Astrocyte of the cerebellum (primary cell): ENCODE measurements at regions of chr7 and their contacts with region 1.

Region 1: DNA sequence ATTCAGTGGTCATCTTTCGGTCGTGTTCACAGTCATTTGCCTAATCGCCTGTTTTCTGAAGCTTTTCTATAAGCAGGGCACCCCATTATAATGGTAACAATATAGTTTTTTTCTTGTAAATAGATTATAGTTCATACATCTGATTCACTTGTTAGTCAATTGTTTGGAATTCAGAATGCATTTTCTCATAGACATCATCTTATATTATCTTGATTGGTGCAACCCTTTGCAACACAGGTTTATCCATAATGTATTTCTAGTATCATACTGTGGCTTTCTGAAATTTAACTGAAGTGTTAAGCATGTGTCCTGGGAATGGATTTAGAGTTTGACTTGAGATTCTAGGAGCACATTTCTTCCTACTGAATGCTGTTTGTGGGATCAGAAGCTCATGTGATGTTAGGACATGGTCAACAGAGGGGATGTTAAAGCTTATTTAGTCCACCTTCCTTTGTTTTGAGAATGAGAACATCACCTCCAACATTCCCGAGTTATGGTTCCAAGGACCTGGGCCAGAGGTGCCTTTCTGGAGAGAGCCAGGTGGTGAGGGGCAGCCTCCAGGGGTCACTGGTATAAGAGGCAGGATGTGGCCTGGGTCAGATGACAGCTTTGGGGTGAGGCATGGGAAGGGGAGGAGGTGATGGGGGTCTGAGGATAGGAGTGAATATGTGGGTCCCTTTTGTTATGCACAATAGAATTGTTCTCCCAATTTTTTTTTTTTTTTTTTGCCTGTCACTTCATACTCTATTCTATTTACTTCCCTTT is 415.6 kb downstream of the EXOC4 start:
- DNase-seq: no peak
- H3K4me3 ChIP-seq: no peak overlapping the region
- CTCF ChIP-seq: no peak

Region 2: GRCh38 chr7:133571076-133571475 is 97.4 kb before region 1 on chr7:
- in situ Hi-C with region 1: loop called (anchors 5 kb)
- DNase-seq: no peak
- H3K4me3 ChIP-seq: no peak overlapping the region
- CTCF ChIP-seq: no peak